ENCODE measurements at regions of chr1 and their contacts with region 1.

Region 1: GRCh38 chr1:46527474-46528296 is 23.8 kb downstream of the KNCN start:
- DNase-seq: peak; percentile 87
- H3K4me3 ChIP-seq: no peak overlapping the region
- H3K27ac ChIP-seq: no peak overlapping the region
- H3K4me1 ChIP-seq: peaks cover 0 to 2% (median 0%) of the 10 kb centered on the region in 4 donors
- H3K27me3 ChIP-seq: peaks cover 0 to 38% (median 11%) of the 10 kb centered on the region in 3 donors
- CTCF ChIP-seq: peak; percentile 74 to 93 (median 85)
- EP300 ChIP-seq: no peak
- POLR2A ChIP-seq: no peak

Region 2: GRCh38 chr1:46197964-46198811 is 329.5 kb before region 1 on chr1 and contains the start of gene POMGNT1:
- intact Hi-C with region 1: no loop called
- DNase-seq: peak; percentile 75
- H3K4me3 ChIP-seq: peak within 1 kb of the TSS; percentile 64 to 93 (median 82)
- H3K27ac ChIP-seq: peak within 1 kb of the TSS; percentile 65 to 87 (median 84)
- H3K4me1 ChIP-seq: peaks cover 0 to 31% (median 27%) of the 10 kb centered on the region in 4 donors
- H3K27me3 ChIP-seq: no peaks in the 10 kb centered on the region
- CTCF ChIP-seq: no peak
- EP300 ChIP-seq: no peak
- POLR2A ChIP-seq: peak in 1 of 2 donors; percentile 20
- total RNA-seq, gene POMGNT1: 29.9 to 37.4 (median 33.5) TPM

Region 3: GRCh38 chr1:46406881-46407608 is 120.6 kb before region 1 on chr1:
- intact Hi-C with region 1: loop called (anchors 2 kb)
- DNase-seq: no peak
- H3K4me3 ChIP-seq: peak overlapping the region; percentile 3 to 35 (median 25)
- H3K27ac ChIP-seq: peak overlapping the region in 1 of 4 donors; percentile 7
- H3K4me1 ChIP-seq: peaks cover 0 to 20% (median 16%) of the 10 kb centered on the region in 4 donors
- H3K27me3 ChIP-seq: no peaks in the 10 kb centered on the region
- CTCF ChIP-seq: no peak
- EP300 ChIP-seq: no peak
- POLR2A ChIP-seq: no peak

Region 4: GRCh38 chr1:46446646-46447498 is 80.8 kb before region 1 on chr1:
- intact Hi-C with region 1: loop called (anchors 1 kb)
- DNase-seq: peak; percentile 87
- H3K4me3 ChIP-seq: no peak overlapping the region
- H3K27ac ChIP-seq: no peak overlapping the region
- H3K4me1 ChIP-seq: peaks cover 0 to 19% (median 17%) of the 10 kb centered on the region in 4 donors
- H3K27me3 ChIP-seq: peaks cover 23 to 49% (median 38%) of the 10 kb centered on the region in 3 donors
- CTCF ChIP-seq: peak; percentile 48 to 88 (median 65)
- EP300 ChIP-seq: no peak
- POLR2A ChIP-seq: no peak

Region 5: GRCh38 chr1:46477153-46477929 is 50.3 kb before region 1 on chr1:
- intact Hi-C with region 1: loop called (anchors 2 kb)
- DNase-seq: peak; percentile 80
- H3K4me3 ChIP-seq: no peak overlapping the region
- H3K27ac ChIP-seq: no peak overlapping the region
- H3K4me1 ChIP-seq: no peaks in the 10 kb centered on the region
- H3K27me3 ChIP-seq: peaks cover 7 to 80% (median 25%) of the 10 kb centered on the region in 3 donors
- CTCF ChIP-seq: peak; percentile 40 to 82 (median 74)
- EP300 ChIP-seq: no peak
- POLR2A ChIP-seq: no peak

Region 6: GRCh38 chr1:46643368-46643775 is 115.7 kb after region 1 on chr1:
- intact Hi-C with region 1: no loop called
- DNase-seq: peak; percentile 73
- H3K4me3 ChIP-seq: no peak overlapping the region
- H3K27ac ChIP-seq: peak overlapping the region; percentile 30 to 64 (median 57)
- H3K4me1 ChIP-seq: peaks cover 0 to 39% (median 27%) of the 10 kb centered on the region in 4 donors
- H3K27me3 ChIP-seq: no peaks in the 10 kb centered on the region
- CTCF ChIP-seq: no peak
- EP300 ChIP-seq: peak in 2 of 4 donors; percentile 47 to 52
- POLR2A ChIP-seq: no peak

Measured in sigmoid colon (tissue), 7 donors.